Activated B cell treated with CpG ODN at 0.5 μM for 24 hours (primary cell): ENCODE measurements at regions of chr7 and their contacts with region 1.

Region 1: DNA sequence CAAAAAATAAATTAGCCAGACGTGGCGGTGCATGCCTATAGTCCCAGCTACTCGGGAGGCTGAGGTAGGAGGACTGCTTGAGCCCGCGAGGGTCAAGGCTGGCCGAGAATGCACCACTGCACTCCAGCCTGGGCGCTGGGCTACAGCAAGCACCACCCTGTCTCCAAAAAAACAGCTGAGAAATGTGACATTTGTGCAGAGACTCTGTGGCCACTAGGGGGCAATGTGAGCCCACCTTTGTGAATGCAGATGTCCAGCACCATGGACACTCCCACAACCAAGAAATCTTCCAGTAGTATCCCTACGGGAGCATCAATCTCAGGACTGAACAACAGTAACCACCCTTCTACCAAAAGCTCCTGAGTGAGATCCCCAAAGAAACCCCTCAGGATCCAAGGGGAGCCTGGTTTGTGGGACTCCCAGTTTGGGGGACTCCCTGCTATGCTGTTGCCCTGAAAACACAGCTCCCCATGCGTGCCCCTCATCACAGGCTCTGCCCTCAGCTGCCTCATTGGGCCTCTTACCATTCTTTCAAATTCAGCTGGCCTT is 6.2 kb upstream of the AHCYL2 start:
- DNase-seq: peak; percentile 61
- ATAC-seq: peak; percentile 83
- H3K4me3 Mint-ChIP-seq: no peak overlapping the region
- H3K27ac Mint-ChIP-seq: no peak overlapping the region
- H3K4me1 Mint-ChIP-seq: peaks cover 15% of the 10 kb centered on the region
- H3K27me3 Mint-ChIP-seq: no peaks in the 10 kb centered on the region
- CTCF ChIP-seq: peak; percentile 32

Region 2: DNA sequence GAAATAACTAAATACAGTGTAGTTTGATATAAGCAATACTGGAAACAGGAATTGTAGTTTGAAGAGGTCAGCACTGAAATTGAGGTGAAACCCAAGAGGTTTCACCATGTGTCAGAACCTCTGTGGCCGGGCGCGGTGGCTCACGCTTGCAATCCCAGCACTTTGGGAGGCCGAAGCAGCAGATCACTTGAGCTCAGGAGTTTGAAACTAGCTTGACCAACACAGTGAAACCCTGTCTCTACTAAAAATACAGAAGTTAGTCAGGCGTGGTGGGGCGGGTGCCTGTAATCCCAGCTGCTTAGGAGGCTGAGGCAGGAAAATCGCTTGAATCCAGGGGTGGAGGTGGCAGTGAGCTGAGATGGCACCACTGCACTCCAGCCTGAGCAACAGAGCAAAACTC is 20.0 kb after region 1 on chr7:
- CTCF ChIA-PET with region 1: interaction called, 11 read pairs
- POLR2A ChIA-PET with region 1: no interaction called
- intact Hi-C with region 1: no loop called
- DNase-seq: no peak
- ATAC-seq: no peak
- H3K4me3 Mint-ChIP-seq: no peak overlapping the region
- H3K27ac Mint-ChIP-seq: no peak overlapping the region
- H3K4me1 Mint-ChIP-seq: no peaks in the 10 kb centered on the region
- H3K27me3 Mint-ChIP-seq: no peaks in the 10 kb centered on the region
- CTCF ChIP-seq: no peak

Region 3: GRCh38 chr7:129271500-129272355 is 53.1 kb after region 1 on chr7:
- CTCF ChIA-PET with region 1: interaction called, 169 read pairs
- POLR2A ChIA-PET with region 1: interaction called, 12 read pairs
- intact Hi-C with region 1: loop called (anchors 1 kb)
- DNase-seq: no peak
- ATAC-seq: peak; percentile 83
- H3K4me3 Mint-ChIP-seq: peak overlapping the region; percentile 69
- H3K27ac Mint-ChIP-seq: peak overlapping the region; percentile 69
- H3K4me1 Mint-ChIP-seq: peaks cover 21% of the 10 kb centered on the region
- H3K27me3 Mint-ChIP-seq: no peaks in the 10 kb centered on the region
- CTCF ChIP-seq: peak; percentile 28

Region 4: GRCh38 chr7:129334473-129334872 is 115.9 kb after region 1 on chr7:
- CTCF ChIA-PET with region 1: no interaction called
- POLR2A ChIA-PET with region 1: no interaction called
- intact Hi-C with region 1: no loop called
- DNase-seq: no peak
- ATAC-seq: no peak
- H3K4me3 Mint-ChIP-seq: no peak overlapping the region
- H3K27ac Mint-ChIP-seq: no peak overlapping the region
- H3K4me1 Mint-ChIP-seq: no peaks in the 10 kb centered on the region
- H3K27me3 Mint-ChIP-seq: no peaks in the 10 kb centered on the region
- CTCF ChIP-seq: no peak

Region 5: GRCh38 chr7:129367700-129368388 is 149.3 kb after region 1 on chr7:
- CTCF ChIA-PET with region 1: interaction called, 19 read pairs
- POLR2A ChIA-PET with region 1: no interaction called
- intact Hi-C with region 1: no loop called
- DNase-seq: peak; percentile 50
- ATAC-seq: peak; percentile 85
- H3K4me3 Mint-ChIP-seq: peak overlapping the region; percentile 61
- H3K27ac Mint-ChIP-seq: peak overlapping the region; percentile 46
- H3K4me1 Mint-ChIP-seq: peaks cover 27% of the 10 kb centered on the region
- H3K27me3 Mint-ChIP-seq: no peaks in the 10 kb centered on the region
- CTCF ChIP-seq: no peak

Region 6: GRCh38 chr7:129635300-129636029 is 416.9 kb after region 1 on chr7:
- CTCF ChIA-PET with region 1: no interaction called
- POLR2A ChIA-PET with region 1: no interaction called
- intact Hi-C with region 1: loop called (anchors 5 kb)
- DNase-seq: peak; percentile 22
- ATAC-seq: peak; percentile 88
- H3K4me3 Mint-ChIP-seq: no peak overlapping the region
- H3K27ac Mint-ChIP-seq: no peak overlapping the region
- H3K4me1 Mint-ChIP-seq: peaks cover 16% of the 10 kb centered on the region
- H3K27me3 Mint-ChIP-seq: no peaks in the 10 kb centered on the region
- CTCF ChIP-seq: peak; percentile 22